Left cardiac atrium (tissue), 4 donors: ENCODE measurements at regions of chr17 and their contacts with region 1.

Region 1: GRCh38 chr17:73156166-73156840 is 8.5 kb upstream of the SSTR2 start:
- DNase-seq: peak; percentile 76
- ATAC-seq: peak; percentile 95

Region 2: DNA sequence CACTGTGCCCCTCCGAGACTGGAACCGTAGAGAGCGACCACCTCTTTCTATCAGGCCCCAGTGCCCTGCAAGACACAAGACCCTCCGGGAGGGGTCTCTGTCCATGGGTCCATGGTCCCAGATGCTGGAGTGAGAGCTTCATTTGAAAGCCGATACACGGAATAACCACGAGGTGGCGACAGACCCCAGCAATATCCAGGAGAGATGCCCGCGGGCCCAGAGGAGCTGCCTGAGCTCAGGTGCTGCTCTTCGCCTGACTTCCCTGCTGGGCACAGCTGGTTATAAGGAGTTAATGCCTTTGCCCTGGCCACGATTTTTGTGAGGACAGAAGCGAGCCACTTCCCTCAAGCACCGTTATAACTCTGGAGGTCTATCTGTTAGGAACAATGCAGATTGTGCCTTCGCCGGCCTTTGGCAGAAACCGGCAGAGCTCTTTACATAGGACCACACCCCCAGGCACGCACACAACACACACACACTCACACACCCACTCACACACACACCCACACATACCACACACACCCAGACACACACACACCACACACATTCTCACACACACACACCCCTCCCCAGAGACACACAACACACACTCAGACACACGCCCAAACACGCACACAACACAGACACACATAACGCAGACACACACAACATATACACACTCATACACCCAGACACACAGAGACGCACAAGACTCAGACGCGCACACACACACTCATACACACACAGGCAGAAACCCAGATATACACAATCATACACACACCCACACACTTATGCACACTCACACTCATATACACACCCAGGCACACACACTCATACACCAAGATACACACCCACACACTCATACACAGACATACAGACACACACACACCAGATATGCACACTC is 599.1 kb before region 1 on chr17:
- intact Hi-C with region 1: loop called in 1 of 2 experiments (anchors 10 kb)
- DNase-seq: peak; percentile 65
- ATAC-seq: peak; percentile 45 to 52

Region 3: DNA sequence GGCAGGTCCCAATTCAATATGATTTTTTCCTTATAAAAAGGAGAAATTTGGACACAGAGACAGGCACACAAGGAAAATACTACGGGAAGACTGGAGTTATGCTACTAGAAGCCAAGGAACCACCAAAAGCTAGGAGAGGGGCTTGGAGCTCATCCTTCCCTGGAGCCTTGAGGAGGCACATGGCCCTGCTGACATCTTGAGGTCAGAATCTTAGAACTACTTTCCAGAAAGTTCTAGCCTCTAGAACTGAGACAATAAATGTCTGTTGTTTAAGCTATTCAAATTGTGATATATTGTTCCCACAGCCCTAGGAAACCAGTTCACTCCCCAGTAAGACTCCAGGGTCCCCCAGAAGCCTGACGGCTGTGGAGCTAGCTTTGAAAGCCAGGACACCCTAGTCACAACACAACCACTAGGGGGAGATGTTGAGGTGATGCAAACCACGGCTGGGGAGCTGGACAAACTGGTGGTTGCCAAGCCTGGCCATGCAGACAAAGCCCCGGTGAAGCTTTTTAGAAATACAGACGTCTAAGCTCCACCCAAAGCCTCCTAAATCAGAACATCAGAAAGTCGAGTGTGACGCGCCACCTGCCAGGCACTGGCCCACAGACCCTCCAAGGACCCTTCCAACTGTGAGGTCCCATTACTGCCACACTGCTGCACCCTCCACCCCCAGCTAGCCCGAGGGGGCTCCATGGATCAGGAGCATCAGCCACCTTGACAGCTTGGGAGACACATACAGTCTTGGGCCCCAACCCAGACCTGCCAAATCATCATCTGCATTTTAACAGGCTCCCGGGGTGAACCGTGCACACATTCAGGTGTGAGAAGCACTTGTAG is 170.2 kb before region 1 on chr17:
- intact Hi-C with region 1: loop called in 1 of 2 experiments (anchors 5 kb)
- DNase-seq: peak; percentile 67
- ATAC-seq: peak; percentile 71 to 91